Colonic mucosa (tissue), 4 donors: ENCODE measurements at regions of chr16 and their contacts with region 1.

Region 1: GRCh38 chr16:4968879-4969456 is 10.8 kb downstream of the SEC14L5 start:
- DNase-seq: no peak
- H3K4me3 ChIP-seq: no peak overlapping the region
- H3K27ac ChIP-seq: no peak overlapping the region
- H3K4me1 ChIP-seq: no peaks in the 10 kb centered on the region
- H3K27me3 ChIP-seq: no peaks in the 10 kb centered on the region
- CTCF ChIP-seq: no peak

Region 2: GRCh38 chr16:4869147-4869805 is 99.7 kb before region 1 on chr16:
- intact Hi-C with region 1: no loop called
- DNase-seq: no peak
- H3K4me3 ChIP-seq: no peak overlapping the region
- H3K27ac ChIP-seq: no peak overlapping the region
- H3K4me1 ChIP-seq: no peaks in the 10 kb centered on the region
- H3K27me3 ChIP-seq: no peaks in the 10 kb centered on the region
- CTCF ChIP-seq: no peak

Region 3: GRCh38 chr16:4892361-4893102 is 76.4 kb before region 1 on chr16:
- intact Hi-C with region 1: no loop called
- DNase-seq: no peak
- H3K4me3 ChIP-seq: no peak overlapping the region
- H3K27ac ChIP-seq: no peak overlapping the region
- H3K4me1 ChIP-seq: no peaks in the 10 kb centered on the region
- H3K27me3 ChIP-seq: no peaks in the 10 kb centered on the region
- CTCF ChIP-seq: no peak

Region 4: GRCh38 chr16:5071681-5072333 is 102.8 kb after region 1 on chr16 and contains the start of gene ALG1:
- intact Hi-C with region 1: loop called (anchors 10 kb)
- DNase-seq: peak; percentile 90
- H3K4me3 ChIP-seq: peak within 1 kb of the TSS; percentile 71
- H3K27ac ChIP-seq: peak within 1 kb of the TSS; percentile 73
- H3K4me1 ChIP-seq: peaks cover 5% of the 10 kb centered on the region
- H3K27me3 ChIP-seq: no peaks in the 10 kb centered on the region
- CTCF ChIP-seq: no peak
- total RNA-seq, gene ALG1: 27.7 to 51.3 TPM